CD4-positive, alpha-beta T cell (primary cell): ENCODE measurements at regions of chr6 and their contacts with region 1.

Region 1: GRCh38 chr6:157756708-157757429 is 66.2 kb upstream of the SNX9 start:
- DNase-seq: peak; percentile 68 to 90 (median 76)
- ATAC-seq: peak; percentile 31
- H3K4me3 ChIP-seq: no peak overlapping the region
- H3K4me3 Mint-ChIP-seq: peak overlapping the region; percentile 26
- H3K27ac ChIP-seq: no peak overlapping the region
- H3K27ac Mint-ChIP-seq: peak overlapping the region; percentile 87
- H3K4me1 ChIP-seq: peaks cover 49% of the 10 kb centered on the region
- H3K4me1 Mint-ChIP-seq: peaks cover 71% of the 10 kb centered on the region
- H3K27me3 ChIP-seq: no peaks in the 10 kb centered on the region
- H3K27me3 Mint-ChIP-seq: no peaks in the 10 kb centered on the region
- CTCF ChIP-seq: peak; percentile 92

Region 2: DNA sequence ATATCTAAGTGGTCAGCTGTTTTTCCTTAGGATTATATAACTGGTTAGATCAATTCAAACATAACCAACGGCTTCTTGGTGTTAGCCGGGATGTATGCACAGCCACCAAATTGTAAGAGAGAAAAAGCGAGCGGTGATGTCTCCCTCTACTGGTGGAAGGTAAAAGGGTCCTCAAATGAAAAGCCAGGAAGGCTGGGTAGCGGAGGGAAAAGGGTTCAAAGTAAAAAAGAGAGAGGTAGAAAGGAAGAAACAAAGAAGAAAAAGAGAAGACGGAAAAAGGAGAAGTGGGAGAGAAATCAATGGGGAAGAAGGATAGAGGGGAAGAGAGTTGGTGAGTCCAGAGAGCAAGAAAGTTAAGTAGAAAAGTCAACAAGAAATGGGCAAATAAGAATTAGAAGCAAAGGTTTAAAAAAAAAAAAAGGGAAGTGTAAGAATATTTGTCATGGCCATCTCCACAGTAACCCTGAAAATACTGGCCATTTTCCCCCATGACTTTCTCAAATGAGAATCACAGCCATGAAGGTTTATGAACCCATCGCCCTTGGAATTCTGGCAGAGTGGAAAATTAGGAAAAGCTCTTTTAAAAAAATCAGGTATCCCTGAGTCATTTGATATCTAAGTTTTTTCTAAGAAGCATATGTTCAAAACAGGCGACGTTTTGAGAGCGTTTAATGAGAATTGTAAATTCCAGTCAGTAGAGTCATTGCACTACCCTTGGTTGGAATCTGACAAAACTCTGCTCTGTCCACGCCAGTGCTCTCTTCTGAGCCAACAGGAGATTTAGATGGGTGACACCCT is 89.5 kb before region 1 on chr6:
- CTCF ChIA-PET with region 1: interaction called, 3 read pairs
- POLR2A ChIA-PET with region 1: no interaction called
- intact Hi-C with region 1: loop called in 1 of 2 experiments (anchors 10 kb)
- DNase-seq: peak; percentile 22 to 77 (median 40)
- ATAC-seq: peak; percentile 65
- H3K4me3 ChIP-seq: no peak overlapping the region
- H3K4me3 Mint-ChIP-seq: no peak overlapping the region
- H3K27ac ChIP-seq: no peak overlapping the region
- H3K27ac Mint-ChIP-seq: no peak overlapping the region
- H3K4me1 ChIP-seq: peaks cover 12% of the 10 kb centered on the region
- H3K4me1 Mint-ChIP-seq: peaks cover 28% of the 10 kb centered on the region
- H3K27me3 ChIP-seq: no peaks in the 10 kb centered on the region
- H3K27me3 Mint-ChIP-seq: no peaks in the 10 kb centered on the region
- CTCF ChIP-seq: peak; percentile 99

Region 3: GRCh38 chr6:157867155-157867559 is 110.3 kb after region 1 on chr6:
- CTCF ChIA-PET with region 1: interaction called, 11 read pairs
- POLR2A ChIA-PET with region 1: no interaction called
- intact Hi-C with region 1: loop called in 1 of 2 experiments (anchors 1 kb)
- DNase-seq: peak in 7 of 14 experiments; percentile 14 to 60 (median 27)
- ATAC-seq: peak; percentile 72
- H3K4me3 ChIP-seq: no peak overlapping the region
- H3K4me3 Mint-ChIP-seq: peak overlapping the region; percentile 6
- H3K27ac ChIP-seq: no peak overlapping the region
- H3K27ac Mint-ChIP-seq: peak overlapping the region; percentile 67
- H3K4me1 ChIP-seq: peaks cover 13% of the 10 kb centered on the region
- H3K4me1 Mint-ChIP-seq: peaks cover 44% of the 10 kb centered on the region
- H3K27me3 ChIP-seq: no peaks in the 10 kb centered on the region
- H3K27me3 Mint-ChIP-seq: no peaks in the 10 kb centered on the region
- CTCF ChIP-seq: no peak

Region 4: DNA sequence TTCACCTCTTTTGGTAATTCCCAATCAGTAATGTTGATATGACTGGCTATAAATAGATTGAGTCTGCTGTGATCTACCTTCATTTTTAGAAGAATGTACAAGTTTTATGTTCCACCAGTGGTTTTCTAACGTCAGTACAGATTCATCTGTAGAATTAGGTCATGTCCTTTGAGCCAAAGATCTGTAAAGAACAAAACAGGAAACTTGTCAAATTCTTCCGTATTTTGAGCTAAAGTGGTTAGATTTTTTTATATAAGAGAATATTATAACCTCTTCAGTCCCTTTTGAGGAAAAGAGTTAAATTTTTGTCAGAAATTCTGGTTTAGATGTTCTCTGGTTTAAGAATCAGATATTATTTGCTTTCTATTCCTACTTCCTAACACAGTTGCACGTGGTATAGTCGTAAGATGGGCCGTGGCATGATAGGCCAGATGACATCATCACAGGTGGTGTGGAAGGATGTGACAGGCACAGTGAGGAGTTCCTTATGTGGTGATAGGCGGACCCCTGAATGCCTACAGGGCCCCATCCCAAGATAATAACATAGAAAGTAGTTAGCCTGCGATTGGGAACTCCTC is 128.4 kb after region 1 on chr6:
- CTCF ChIA-PET with region 1: interaction called, 5 read pairs
- POLR2A ChIA-PET with region 1: interaction called, 12 read pairs
- intact Hi-C with region 1: no loop called
- DNase-seq: peak in 13 of 14 experiments; percentile 18 to 88 (median 50)
- ATAC-seq: peak; percentile 83
- H3K4me3 ChIP-seq: no peak overlapping the region
- H3K4me3 Mint-ChIP-seq: peak overlapping the region; percentile 6
- H3K27ac ChIP-seq: peak overlapping the region; percentile 83 to 93
- H3K27ac Mint-ChIP-seq: peak overlapping the region; percentile 95
- H3K4me1 ChIP-seq: peaks cover 16% of the 10 kb centered on the region
- H3K4me1 Mint-ChIP-seq: peaks cover 86% of the 10 kb centered on the region
- H3K27me3 ChIP-seq: no peaks in the 10 kb centered on the region
- H3K27me3 Mint-ChIP-seq: no peaks in the 10 kb centered on the region
- CTCF ChIP-seq: peak; percentile 19

Region 5: DNA sequence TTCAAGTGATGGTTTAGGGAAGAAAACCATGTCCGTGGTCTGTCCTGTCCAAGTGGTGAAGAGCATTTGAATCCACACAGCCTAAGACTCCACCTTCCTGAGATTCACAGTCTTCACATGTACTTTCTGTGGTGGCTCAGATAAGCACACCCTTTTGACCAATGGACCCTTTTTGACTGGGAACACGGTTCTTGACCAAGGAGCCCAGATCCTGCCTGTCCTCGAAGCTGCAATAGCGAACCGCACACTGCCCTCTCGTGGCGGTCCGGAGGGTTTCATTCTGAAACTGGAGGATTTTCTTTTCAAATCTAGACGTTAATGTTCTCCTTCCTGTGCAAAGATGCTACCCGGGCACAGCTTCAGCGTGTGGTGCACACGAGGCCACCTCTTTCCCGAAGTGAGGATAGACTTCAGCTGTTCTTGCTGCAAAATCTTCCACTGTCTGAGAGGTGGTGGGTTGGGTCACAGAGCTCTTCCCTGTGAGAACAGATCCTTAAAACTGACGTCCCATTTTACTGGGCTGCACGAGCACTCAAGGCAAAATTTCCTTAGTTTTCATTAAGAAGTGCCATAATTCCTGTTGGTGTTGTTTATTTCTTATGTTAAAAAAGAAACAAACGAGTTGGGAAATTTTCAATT is 315.3 kb after region 1 on chr6:
- CTCF ChIA-PET with region 1: no interaction called
- POLR2A ChIA-PET with region 1: no interaction called
- intact Hi-C with region 1: loop called in 1 of 2 experiments (anchors 1 kb)
- DNase-seq: peak; percentile 44 to 81 (median 62)
- ATAC-seq: peak; percentile 67
- H3K4me3 ChIP-seq: no peak overlapping the region
- H3K4me3 Mint-ChIP-seq: no peak overlapping the region
- H3K27ac ChIP-seq: no peak overlapping the region
- H3K27ac Mint-ChIP-seq: no peak overlapping the region
- H3K4me1 ChIP-seq: peaks cover 17% of the 10 kb centered on the region
- H3K4me1 Mint-ChIP-seq: peaks cover 6% of the 10 kb centered on the region
- H3K27me3 ChIP-seq: no peaks in the 10 kb centered on the region
- H3K27me3 Mint-ChIP-seq: no peaks in the 10 kb centered on the region
- CTCF ChIP-seq: peak; percentile 80